MCF 10A (cell line): ENCODE measurements at regions of chr7 and their contacts with region 1.

Region 1: DNA sequence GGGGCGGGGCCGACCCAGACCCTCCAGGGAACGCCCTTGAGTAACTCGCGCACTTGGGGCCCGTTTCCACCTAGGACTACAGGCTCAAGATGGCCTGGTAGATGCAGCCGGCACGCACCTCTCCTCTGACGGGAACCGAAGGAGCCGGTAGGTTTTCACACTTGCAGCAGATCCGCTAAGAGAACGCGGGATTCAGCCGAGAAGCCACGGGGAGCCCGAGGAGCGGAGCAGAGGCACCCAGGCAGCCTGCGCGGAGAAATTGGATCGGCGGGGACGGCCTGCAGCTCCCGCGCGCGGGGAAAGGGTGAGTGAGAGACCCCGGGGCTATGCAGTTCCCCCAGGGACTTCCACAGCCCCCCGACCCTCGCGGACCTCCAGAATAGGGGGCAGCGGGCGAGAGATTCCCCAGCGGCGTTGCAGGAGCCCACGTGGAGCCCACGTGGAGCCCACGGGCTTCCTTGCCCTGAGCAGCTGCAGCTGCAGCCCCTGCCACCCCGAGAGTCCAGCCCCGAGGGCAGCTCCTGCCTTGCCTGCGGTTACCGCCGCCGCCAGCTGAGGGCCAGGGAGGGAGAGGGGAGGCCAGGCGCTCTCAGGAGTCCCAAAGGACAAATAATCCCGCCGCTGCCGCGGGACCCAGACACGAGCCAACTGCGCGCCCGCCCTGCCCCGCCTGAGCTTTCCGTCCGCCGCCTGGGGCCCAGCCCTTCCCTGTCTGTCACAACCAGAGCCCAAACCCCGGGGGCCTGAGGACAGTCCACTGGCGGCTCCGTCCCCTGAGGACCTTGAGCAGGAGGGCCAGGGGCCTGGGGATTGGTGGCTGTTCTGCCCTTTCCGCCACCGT is 13.1 kb downstream of the IFT22 start:
- DNase-seq: peak; percentile 75
- H3K4me3 Mint-ChIP-seq: peak overlapping the region; percentile 88
- H3K27ac Mint-ChIP-seq: peak overlapping the region; percentile 88
- H3K4me1 Mint-ChIP-seq: no peaks in the 10 kb centered on the region
- H3K27me3 Mint-ChIP-seq: no peaks in the 10 kb centered on the region
- CTCF ChIP-seq: no peak

Region 2: GRCh38 chr7:101321491-101322401 is 13.3 kb after region 1 on chr7 and contains the start of gene IFT22:
- CTCF ChIA-PET with region 1: no interaction called
- POLR2A ChIA-PET with region 1: interaction called, 14 read pairs
- intact Hi-C with region 1: no loop called
- DNase-seq: peak; percentile 90
- H3K4me3 Mint-ChIP-seq: peak within 1 kb of the TSS; percentile 81
- H3K27ac Mint-ChIP-seq: peak within 1 kb of the TSS; percentile 91
- H3K4me1 Mint-ChIP-seq: no peaks in the 10 kb centered on the region
- H3K27me3 Mint-ChIP-seq: no peaks in the 10 kb centered on the region
- CTCF ChIP-seq: peak; percentile 17
- total RNA-seq, gene IFT22: 21.5 and 33.8 TPM in 2 replicates